Psoas muscle (tissue), 8 donors: ENCODE measurements at regions of chr15 and their contacts with region 1.

Region 1: GRCh38 chr15:39756806-39757522 is 25.7 kb downstream of the FSIP1 start:
- DNase-seq: no peak
- ATAC-seq: no peak
- H3K4me3 ChIP-seq: no peak overlapping the region
- H3K27ac ChIP-seq: no peak overlapping the region
- H3K4me1 ChIP-seq: no peaks in the 10 kb centered on the region
- H3K27me3 ChIP-seq: peaks cover 0 to 2% (median 0%) of the 10 kb centered on the region in 3 donors
- CTCF ChIP-seq: peak; percentile 88

Region 2: DNA sequence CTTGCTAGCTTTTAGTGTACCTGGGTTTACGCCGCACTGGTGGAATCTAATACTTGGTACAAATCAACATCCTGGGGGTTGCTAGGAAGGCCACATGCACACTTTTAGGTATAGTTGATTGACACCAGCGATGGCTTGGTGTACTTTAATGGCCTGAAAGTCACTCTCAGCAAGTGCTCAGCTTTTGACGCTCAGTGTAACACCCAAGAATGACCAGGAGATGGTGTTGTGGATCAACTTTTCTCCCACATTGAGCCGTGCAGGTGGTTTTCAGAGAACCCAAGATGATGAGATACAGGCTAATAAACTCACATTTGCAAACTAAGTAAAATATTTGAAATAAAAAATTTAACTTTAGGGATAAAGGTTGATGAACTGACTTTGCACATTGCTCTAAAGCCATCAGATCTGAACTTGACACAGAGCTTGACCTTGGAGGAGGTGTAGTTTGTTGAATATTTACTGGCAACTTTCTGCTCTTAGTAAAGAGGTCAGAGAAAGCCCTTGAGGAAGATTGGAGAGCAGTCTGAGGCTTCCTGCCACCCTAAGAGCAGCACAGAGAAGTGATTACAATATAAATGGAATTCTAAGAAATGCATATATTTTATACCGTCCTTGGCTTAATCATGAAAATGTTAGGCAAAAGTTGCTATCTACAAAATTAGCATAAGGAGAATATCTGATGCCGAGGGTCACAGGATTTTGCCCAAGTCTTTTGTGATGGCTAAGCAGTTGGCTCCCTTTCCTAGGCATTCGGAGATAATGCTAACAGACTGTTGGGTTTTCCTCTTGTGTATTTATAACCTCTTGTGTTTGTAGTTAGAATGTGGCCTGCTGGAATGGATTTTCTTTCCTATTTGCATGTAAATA is 1048.9 kb before region 1 on chr15:
- intact Hi-C with region 1: loop called (anchors 5 kb)
- DNase-seq: no peak
- ATAC-seq: peak in 3 of 4 donors; percentile 49 to 74 (median 55)
- H3K4me3 ChIP-seq: no peak overlapping the region
- H3K27ac ChIP-seq: no peak overlapping the region
- H3K4me1 ChIP-seq: no peaks in the 10 kb centered on the region
- H3K27me3 ChIP-seq: peaks cover 0 to 12% (median 0%) of the 10 kb centered on the region in 3 donors
- CTCF ChIP-seq: peak; percentile 54

Region 3: GRCh38 chr15:38817427-38818156 is 939.4 kb before region 1 on chr15:
- intact Hi-C with region 1: loop called in 1 of 2 experiments (anchors 10 kb)
- DNase-seq: peak; percentile 74 to 81
- ATAC-seq: peak; percentile 48 to 85 (median 76)
- H3K4me3 ChIP-seq: no peak overlapping the region
- H3K27ac ChIP-seq: no peak overlapping the region
- H3K4me1 ChIP-seq: no peaks in the 10 kb centered on the region
- H3K27me3 ChIP-seq: no peaks in the 10 kb centered on the region
- CTCF ChIP-seq: peak; percentile 91

Region 4: DNA sequence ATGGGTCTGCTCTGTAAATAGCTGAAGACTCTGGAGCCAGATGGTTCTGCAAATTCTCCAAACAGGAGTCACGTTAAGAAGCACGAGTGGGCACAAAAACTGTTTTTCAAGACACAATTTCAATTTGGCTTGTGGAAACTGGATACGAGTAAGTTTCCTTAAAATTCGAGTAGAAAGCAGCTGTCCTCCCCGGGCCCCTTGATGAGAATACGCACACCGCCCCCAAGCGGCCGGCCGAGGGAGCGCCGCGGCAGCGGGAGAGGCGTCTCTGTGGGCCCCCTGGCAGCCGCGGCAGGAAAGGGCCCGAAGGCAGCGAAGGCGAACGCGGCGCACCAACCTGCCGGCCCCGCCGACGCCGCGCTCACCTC is 176.9 kb before region 1 on chr15:
- intact Hi-C with region 1: loop called in 1 of 2 experiments (anchors 10 kb)
- DNase-seq: peak; percentile 93 to 94
- ATAC-seq: peak; percentile 81 to 91 (median 84)
- H3K4me3 ChIP-seq: peak overlapping the region; percentile 65
- H3K27ac ChIP-seq: peak overlapping the region; percentile 60
- H3K4me1 ChIP-seq: no peaks in the 10 kb centered on the region
- H3K27me3 ChIP-seq: peaks cover 0 to 47% (median 11%) of the 10 kb centered on the region in 3 donors
- CTCF ChIP-seq: peak; percentile 90

Region 5: GRCh38 chr15:39686000-39686613 is 70.9 kb before region 1 on chr15:
- intact Hi-C with region 1: loop called (anchors 1 to 5 kb)
- DNase-seq: no peak
- ATAC-seq: peak in 3 of 4 donors; percentile 57 to 69 (median 68)
- H3K4me3 ChIP-seq: no peak overlapping the region
- H3K27ac ChIP-seq: no peak overlapping the region
- H3K4me1 ChIP-seq: no peaks in the 10 kb centered on the region
- H3K27me3 ChIP-seq: peaks cover 0 to 5% (median 0%) of the 10 kb centered on the region in 3 donors
- CTCF ChIP-seq: peak; percentile 87